CD4-positive, alpha-beta memory T cell (primary cell): ENCODE measurements at regions of chr13 and their contacts with region 1.

Region 1: DNA sequence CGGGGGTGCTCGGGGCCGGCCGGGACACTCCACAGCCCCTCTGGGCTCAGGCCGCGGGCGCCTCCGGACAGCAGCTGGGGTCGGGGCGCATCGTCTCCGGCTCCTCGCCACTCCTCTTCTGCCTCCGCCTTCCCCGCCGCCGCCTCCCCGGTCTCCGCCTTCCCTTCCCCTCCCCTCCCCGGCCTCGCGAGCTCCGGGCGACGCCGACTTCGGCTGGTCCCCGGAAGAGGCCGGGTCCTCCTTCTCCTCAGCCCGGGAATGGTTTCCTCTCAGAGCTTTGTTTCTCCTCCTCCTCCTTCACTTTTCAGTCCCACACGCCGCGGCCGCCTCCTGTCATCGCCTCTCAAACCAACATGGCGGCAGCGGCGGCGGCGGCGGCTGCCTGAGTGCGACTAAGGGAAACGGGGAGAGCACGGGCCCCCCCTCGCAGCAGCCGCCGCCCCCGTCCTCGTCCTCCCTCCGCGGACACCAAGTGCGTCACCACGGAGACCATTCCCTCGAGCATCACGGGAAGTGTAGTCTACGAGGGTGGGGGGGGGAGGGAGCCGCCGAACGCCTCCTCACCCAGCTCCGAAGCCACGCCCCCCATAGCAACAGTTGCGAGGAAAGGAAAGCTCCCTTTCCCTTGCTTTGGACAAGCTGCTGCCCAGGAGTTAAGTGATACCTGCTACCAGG is at the start of gene UBL3:
- DNase-seq: peak; percentile 91 to 96 (median 93)
- H3K4me3 ChIP-seq: peak within 1 kb of the TSS; percentile 85 to 93
- H3K4me3 Mint-ChIP-seq: peak within 1 kb of the TSS; percentile 93 to 99 (median 98)
- H3K27ac ChIP-seq: peak within 1 kb of the TSS; percentile 94
- H3K27ac Mint-ChIP-seq: peak within 1 kb of the TSS; percentile 97 to 100 (median 99)
- H3K4me1 ChIP-seq: peaks cover 28% of the 10 kb centered on the region
- H3K4me1 Mint-ChIP-seq: peaks cover 18 to 39% (median 24%) of the 10 kb centered on the region in 4 donors
- H3K27me3 ChIP-seq: no peaks in the 10 kb centered on the region
- H3K27me3 Mint-ChIP-seq: no peaks in the 10 kb centered on the region
- total RNA-seq, gene UBL3: 45.7 to 47.0 TPM

Region 2: GRCh38 chr13:29595380-29596063 is 254.8 kb before region 1 on chr13 and contains the start of gene SLC7A1:
- CTCF ChIA-PET with region 1: no interaction called
- POLR2A ChIA-PET with region 1: no interaction called
- intact Hi-C with region 1: loop called (anchors 1 kb)
- DNase-seq: peak; percentile 80 to 90 (median 88)
- H3K4me3 ChIP-seq: peak within 1 kb of the TSS; percentile 59 to 61
- H3K4me3 Mint-ChIP-seq: peak within 1 kb of the TSS; percentile 87 to 94 (median 92)
- H3K27ac ChIP-seq: peak within 1 kb of the TSS; percentile 66
- H3K27ac Mint-ChIP-seq: peak within 1 kb of the TSS; percentile 90 to 97 (median 93)
- H3K4me1 ChIP-seq: peaks cover 25% of the 10 kb centered on the region
- H3K4me1 Mint-ChIP-seq: peaks cover 22 to 49% (median 34%) of the 10 kb centered on the region in 4 donors
- H3K27me3 ChIP-seq: no peaks in the 10 kb centered on the region
- H3K27me3 Mint-ChIP-seq: peaks cover 0 to 1% of the 10 kb centered on the region in 2 donors
- total RNA-seq, gene SLC7A1: 38.6 to 42.6 TPM

Region 3: DNA sequence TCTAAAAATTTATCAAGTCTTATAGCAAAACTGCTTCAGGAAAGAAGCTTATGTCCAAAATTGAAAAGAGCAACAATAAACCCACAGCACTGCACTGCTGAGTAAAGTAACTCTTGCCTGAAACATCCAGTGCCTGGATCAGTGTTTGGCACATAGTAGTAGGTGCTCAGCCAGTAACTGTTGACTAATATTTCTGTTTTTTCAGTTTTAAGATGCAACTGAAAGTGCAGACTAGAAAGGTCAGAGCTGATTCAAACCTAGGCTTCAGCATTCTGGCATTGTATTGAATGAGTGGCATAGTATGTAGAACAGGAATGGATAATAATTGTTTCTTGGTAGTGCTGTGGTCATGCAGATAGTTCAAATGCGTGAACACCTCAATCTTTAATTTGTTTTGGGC is 67.6 kb before region 1 on chr13:
- CTCF ChIA-PET with region 1: no interaction called
- POLR2A ChIA-PET with region 1: no interaction called
- intact Hi-C with region 1: no loop called
- DNase-seq: no peak
- H3K4me3 ChIP-seq: no peak overlapping the region
- H3K4me3 Mint-ChIP-seq: no peak overlapping the region
- H3K27ac ChIP-seq: no peak overlapping the region
- H3K27ac Mint-ChIP-seq: peak overlapping the region in 1 of 7 donors; percentile 31
- H3K4me1 ChIP-seq: peaks cover 7% of the 10 kb centered on the region
- H3K4me1 Mint-ChIP-seq: peaks cover 18 to 48% (median 37%) of the 10 kb centered on the region in 4 donors
- H3K27me3 ChIP-seq: no peaks in the 10 kb centered on the region
- H3K27me3 Mint-ChIP-seq: no peaks in the 10 kb centered on the region

Region 4: DNA sequence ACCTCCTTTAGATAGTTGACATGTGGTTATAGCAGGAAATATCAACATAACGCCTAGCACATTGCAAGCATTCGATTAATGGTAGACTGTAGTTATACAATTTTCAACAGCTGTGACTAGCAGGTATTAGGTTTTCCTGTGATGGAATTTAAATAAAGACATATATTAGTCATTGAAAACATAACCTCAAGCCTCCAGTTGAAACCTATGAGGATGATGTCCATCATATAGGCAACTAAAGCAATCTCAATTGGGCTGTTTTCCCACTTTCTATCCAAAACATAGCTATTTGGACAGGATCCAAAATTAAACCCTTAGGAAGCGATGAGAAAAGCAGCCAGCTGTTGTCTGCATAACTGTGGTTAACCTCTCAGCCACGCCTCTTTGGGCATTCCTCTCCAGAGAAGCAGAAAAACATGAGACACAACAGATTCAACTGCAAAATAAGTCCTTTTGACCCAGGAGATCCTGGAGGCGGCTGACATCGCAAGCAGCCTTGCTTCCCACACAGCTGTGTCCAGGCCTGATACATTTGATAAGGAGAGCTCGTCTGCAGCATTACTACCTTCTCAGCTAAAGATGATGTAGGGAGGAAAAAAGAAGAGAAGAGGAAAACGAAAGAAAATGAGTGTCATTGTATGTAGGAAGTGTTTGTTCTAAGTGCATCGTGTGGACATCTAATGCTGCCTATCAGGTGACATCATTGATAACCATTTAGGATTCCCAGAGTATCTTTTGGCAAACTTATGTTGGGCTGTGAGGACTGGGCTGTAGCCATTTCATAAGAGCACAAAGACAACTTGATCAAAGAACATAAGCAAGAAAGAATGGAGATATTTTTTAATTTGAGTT is 52.0 kb after region 1 on chr13:
- CTCF ChIA-PET with region 1: interaction called, 5 read pairs
- POLR2A ChIA-PET with region 1: interaction called, 43 read pairs
- intact Hi-C with region 1: loop called (anchors 1 kb)
- DNase-seq: peak; percentile 49 to 56 (median 51)
- H3K4me3 ChIP-seq: peak overlapping the region; percentile 7 to 36
- H3K4me3 Mint-ChIP-seq: peak overlapping the region; percentile 86 to 97 (median 92)
- H3K27ac ChIP-seq: peak overlapping the region; percentile 32
- H3K27ac Mint-ChIP-seq: peak overlapping the region; percentile 73 to 97 (median 95)
- H3K4me1 ChIP-seq: peaks cover 28% of the 10 kb centered on the region
- H3K4me1 Mint-ChIP-seq: peaks cover 16 to 29% (median 25%) of the 10 kb centered on the region in 4 donors
- H3K27me3 ChIP-seq: no peaks in the 10 kb centered on the region
- H3K27me3 Mint-ChIP-seq: peaks cover 0 to 1% of the 10 kb centered on the region in 2 donors

Region 5: DNA sequence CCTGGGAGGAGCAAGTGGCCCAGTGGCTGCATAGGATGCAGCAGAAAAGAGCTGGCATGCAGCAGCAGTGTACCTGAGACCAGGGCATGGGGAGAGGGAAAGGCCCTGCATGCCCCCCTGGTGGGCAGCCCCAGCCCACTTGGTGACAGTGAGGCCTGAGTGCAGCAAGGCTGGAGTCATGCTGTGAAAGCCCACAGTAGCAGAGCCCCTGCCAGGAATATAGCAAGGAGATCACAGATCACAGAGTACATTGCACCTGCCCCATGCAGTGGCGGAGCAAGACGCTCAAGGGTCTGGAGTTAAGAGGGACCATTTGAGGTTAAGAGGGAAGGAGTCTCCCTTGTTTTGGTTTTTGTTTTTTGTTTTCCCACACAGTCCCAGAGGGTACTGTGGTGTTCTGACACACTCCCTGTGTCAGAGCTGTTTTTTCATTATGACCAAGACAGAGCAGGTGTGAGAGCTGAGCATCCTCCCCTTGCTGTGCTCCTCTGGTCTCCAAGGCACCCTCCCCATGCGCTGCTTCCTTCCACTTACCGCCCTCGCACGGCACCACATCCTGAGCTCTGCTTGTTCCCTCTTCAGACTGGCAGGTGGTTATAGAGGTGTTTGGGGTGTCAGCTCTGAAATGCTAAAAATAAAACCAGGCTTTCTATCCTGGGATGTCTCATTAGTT is 85.1 kb after region 1 on chr13:
- CTCF ChIA-PET with region 1: interaction called, 155 read pairs
- POLR2A ChIA-PET with region 1: interaction called, 263 read pairs
- intact Hi-C with region 1: loop called (anchors 1 kb)
- DNase-seq: peak; percentile 80 to 86 (median 84)
- H3K4me3 ChIP-seq: peak overlapping the region; percentile 72 to 82
- H3K4me3 Mint-ChIP-seq: peak overlapping the region; percentile 86 to 96 (median 94)
- H3K27ac ChIP-seq: peak overlapping the region; percentile 59
- H3K27ac Mint-ChIP-seq: peak overlapping the region; percentile 86 to 97 (median 92)
- H3K4me1 ChIP-seq: peaks cover 64% of the 10 kb centered on the region
- H3K4me1 Mint-ChIP-seq: peaks cover 46 to 77% (median 64%) of the 10 kb centered on the region in 4 donors
- H3K27me3 ChIP-seq: no peaks in the 10 kb centered on the region
- H3K27me3 Mint-ChIP-seq: peaks cover 0 to 2% of the 10 kb centered on the region in 2 donors

Region 6: GRCh38 chr13:30142486-30143211 is 292.3 kb after region 1 on chr13:
- CTCF ChIA-PET with region 1: interaction called, 4 read pairs
- POLR2A ChIA-PET with region 1: interaction called, 15 read pairs
- intact Hi-C with region 1: no loop called
- DNase-seq: peak; percentile 13 to 64 (median 22)
- H3K4me3 ChIP-seq: no peak overlapping the region
- H3K4me3 Mint-ChIP-seq: peak overlapping the region in 7 of 8 donors; percentile 4 to 74 (median 53)
- H3K27ac ChIP-seq: peak overlapping the region; percentile 27
- H3K27ac Mint-ChIP-seq: peak overlapping the region; percentile 83 to 92 (median 88)
- H3K4me1 ChIP-seq: peaks cover 67% of the 10 kb centered on the region
- H3K4me1 Mint-ChIP-seq: peaks cover 49 to 86% (median 70%) of the 10 kb centered on the region in 4 donors
- H3K27me3 ChIP-seq: no peaks in the 10 kb centered on the region
- H3K27me3 Mint-ChIP-seq: no peaks in the 10 kb centered on the region

Region 7: DNA sequence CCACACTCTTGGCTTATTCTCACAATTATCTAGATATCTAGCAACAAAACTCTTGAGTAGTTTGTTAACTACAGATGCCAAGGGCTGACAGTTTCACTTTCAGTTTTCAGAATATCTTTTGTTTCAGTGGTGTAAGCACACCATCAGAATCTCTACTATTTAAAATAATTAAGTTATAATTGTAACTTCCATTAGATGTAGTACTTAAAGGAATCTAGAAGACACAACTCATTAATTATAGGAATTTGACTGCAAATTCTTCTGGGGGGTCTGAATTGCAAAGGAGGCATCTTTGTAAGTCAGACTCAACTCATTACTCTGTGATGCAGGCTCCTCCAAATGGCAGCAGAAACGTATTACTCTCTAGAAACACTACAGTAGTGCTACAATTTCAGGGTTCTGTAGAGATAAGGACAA is 722.5 kb after region 1 on chr13:
- CTCF ChIA-PET with region 1: no interaction called
- POLR2A ChIA-PET with region 1: no interaction called
- intact Hi-C with region 1: loop called (anchors 10 kb)
- DNase-seq: peak; percentile 33 to 53 (median 43)
- H3K4me3 ChIP-seq: peak overlapping the region; percentile 37 to 64
- H3K4me3 Mint-ChIP-seq: peak overlapping the region; percentile 67 to 88 (median 79)
- H3K27ac ChIP-seq: peak overlapping the region; percentile 62
- H3K27ac Mint-ChIP-seq: peak overlapping the region; percentile 56 to 94 (median 91)
- H3K4me1 ChIP-seq: peaks cover 36% of the 10 kb centered on the region
- H3K4me1 Mint-ChIP-seq: peaks cover 28 to 47% (median 33%) of the 10 kb centered on the region in 4 donors
- H3K27me3 ChIP-seq: no peaks in the 10 kb centered on the region
- H3K27me3 Mint-ChIP-seq: no peaks in the 10 kb centered on the region